ACHN (cell line): ENCODE measurements at regions of chr1 and their contacts with region 1.

Region 1: DNA sequence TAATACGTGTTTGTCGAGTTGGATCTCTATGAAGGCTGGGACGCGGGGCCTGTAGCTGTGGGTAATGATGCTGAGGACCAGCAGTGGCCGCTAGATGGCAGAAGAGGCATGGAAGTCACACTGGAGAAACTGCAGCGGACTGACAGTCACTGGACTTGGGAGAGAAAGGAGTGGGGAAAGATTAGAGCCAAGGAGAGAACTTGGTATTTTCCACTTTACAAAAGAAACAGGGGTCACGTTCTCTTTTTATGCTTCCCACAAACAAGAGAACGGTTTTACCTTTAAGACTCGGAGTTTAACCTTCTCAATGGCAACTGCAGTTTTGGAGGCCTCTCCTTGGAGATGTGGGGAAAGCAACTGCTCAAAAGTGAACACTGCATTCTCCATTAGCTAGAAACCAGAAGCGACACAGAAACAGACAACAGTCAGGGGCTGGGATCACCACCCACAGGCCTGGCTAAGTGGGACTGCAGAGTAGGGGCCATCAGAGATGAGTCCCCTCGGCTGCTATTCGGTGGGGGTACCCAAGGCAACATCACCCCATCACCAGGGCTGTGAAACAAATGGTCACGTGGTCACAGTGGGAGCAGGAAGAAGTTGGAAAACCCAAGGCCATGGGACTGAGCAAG is 51.1 kb upstream of the EDEM3 start:
- DNase-seq: peak; percentile 80

Region 2: GRCh38 chr1:184734980-184735379 is 70.8 kb before region 1 on chr1:
- in situ Hi-C with region 1: no loop called
- DNase-seq: no peak

Region 3: GRCh38 chr1:184982002-184982954 is 176.5 kb after region 1 on chr1:
- in situ Hi-C with region 1: loop called (anchors 25 kb)
- DNase-seq: peak; percentile 73

Region 4: GRCh38 chr1:185156854-185157598 is 351.2 kb after region 1 on chr1 and contains the starts of genes SWT1 and TRMT1L:
- in situ Hi-C with region 1: loop called (anchors 25 kb)
- DNase-seq: peak; percentile 99